ENCODE measurements at regions of chr20 and their contacts with region 1.

Region 1: DNA sequence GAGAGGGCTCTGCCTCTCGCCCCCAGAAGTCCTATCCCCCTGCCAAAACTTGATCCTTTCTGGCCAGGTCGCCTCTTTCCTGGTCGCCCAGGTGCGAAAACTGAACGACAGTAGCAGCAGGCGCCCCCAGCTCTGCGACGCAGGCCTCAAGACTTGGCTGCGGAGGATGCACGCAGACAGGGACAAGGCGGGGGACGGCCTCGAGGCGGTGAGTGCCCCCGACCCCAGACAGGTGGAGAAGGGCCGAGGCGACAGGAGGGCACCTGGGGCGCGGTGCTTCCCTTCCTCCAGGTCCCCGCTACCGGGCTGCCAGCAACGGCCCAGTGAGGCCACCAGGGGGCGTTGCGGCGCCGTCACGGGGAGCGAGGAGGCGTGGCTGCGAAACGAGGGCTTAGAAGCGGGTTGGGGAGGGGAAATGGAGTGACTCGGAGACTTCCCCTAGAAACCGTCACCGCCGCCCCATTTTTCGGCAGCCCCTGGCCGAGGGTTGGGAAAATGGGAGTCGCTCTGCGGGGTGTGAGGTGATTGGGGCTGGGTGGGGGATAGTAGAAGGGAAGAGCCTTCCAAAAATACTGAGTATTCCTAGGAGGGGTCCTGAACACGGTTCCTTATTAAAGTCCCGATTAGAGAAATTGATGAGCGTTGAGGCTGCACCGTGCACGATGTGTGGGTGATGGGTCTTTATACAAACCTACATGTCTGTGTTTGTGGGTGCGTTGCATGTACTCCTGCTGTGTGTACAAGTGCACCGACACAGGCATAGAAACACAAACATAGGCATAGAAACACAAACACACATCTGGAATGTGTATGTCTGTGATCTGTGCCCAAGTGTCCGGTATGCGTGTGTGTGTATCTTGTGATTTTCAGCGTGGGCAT is 44.6 kb downstream of the ARHGAP40 start:
- DNase-seq: peak; percentile 93
- ATAC-seq: peak; percentile 98
- H3K4me3 Mint-ChIP-seq: peak overlapping the region; percentile 81
- H3K27ac Mint-ChIP-seq: no peak overlapping the region
- H3K4me1 Mint-ChIP-seq: peaks cover 22% of the 10 kb centered on the region
- H3K27me3 Mint-ChIP-seq: peaks cover 30% of the 10 kb centered on the region
- CTCF ChIP-seq: peak; percentile 45

Region 2: DNA sequence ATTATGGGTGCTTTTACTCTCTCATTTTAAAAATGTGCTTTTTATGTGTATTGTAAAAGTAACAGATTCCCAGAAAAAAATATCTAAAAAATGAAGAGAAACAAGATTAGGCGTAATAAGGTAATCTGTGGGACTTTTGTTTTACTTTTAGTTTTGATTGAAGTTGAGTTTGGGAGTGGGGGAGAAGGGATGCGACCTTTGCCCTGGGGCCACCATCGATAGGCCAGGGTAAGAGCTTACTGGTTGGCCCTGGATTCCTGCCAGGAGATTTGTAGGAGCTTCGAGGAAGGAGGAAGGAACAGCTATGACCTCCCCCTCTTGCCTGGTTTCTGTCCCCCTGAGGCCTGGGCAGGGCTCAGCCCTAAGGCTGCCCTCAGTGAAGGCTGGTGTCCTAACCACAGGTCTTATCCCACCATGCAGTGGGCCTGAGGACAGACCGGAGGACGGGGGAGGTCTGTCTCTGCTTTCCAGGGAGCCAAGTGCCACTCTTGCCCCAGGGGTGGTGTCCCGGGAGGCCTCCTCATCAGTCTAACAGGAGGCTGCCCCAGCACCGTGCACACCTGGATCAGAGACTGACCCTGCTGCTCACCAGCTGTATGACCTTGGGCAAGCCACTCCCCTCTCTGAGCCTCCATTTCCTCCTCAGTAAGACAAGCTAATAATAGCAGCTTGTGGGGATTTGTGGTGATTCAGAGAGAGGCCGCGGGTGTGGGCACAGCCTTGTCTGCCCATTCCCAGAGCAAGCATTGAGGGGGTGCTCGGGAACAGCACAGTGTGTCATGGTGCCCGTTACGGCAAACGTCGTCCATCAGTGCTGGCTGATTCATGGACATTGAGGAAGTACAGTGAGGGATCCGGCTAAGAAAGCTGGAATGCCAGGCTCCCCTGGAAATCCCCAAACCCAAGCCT is 502.3 kb before region 1 on chr20:
- CTCF ChIA-PET with region 1: no interaction called
- POLR2A ChIA-PET with region 1: no interaction called
- intact Hi-C with region 1: no loop called
- DNase-seq: no peak
- ATAC-seq: no peak
- H3K4me3 Mint-ChIP-seq: no peak overlapping the region
- H3K27ac Mint-ChIP-seq: no peak overlapping the region
- H3K4me1 Mint-ChIP-seq: no peaks in the 10 kb centered on the region
- H3K27me3 Mint-ChIP-seq: no peaks in the 10 kb centered on the region
- CTCF ChIP-seq: no peak

Region 3: GRCh38 chr20:38730989-38731737 is 84.9 kb after region 1 on chr20:
- CTCF ChIA-PET with region 1: no interaction called
- POLR2A ChIA-PET with region 1: no interaction called
- intact Hi-C with region 1: loop called (anchors 1 kb)
- DNase-seq: peak; percentile 68
- ATAC-seq: peak; percentile 76
- H3K4me3 Mint-ChIP-seq: peak overlapping the region; percentile 65
- H3K27ac Mint-ChIP-seq: no peak overlapping the region
- H3K4me1 Mint-ChIP-seq: peaks cover 52% of the 10 kb centered on the region
- H3K27me3 Mint-ChIP-seq: peaks cover 88% of the 10 kb centered on the region
- CTCF ChIP-seq: peak; percentile 77

Region 4: GRCh38 chr20:38935285-38935684 is 289.1 kb after region 1 on chr20:
- CTCF ChIA-PET with region 1: no interaction called
- POLR2A ChIA-PET with region 1: no interaction called
- intact Hi-C with region 1: loop called (anchors 1 kb)
- DNase-seq: no peak
- ATAC-seq: no peak
- H3K4me3 Mint-ChIP-seq: no peak overlapping the region
- H3K27ac Mint-ChIP-seq: no peak overlapping the region
- H3K4me1 Mint-ChIP-seq: no peaks in the 10 kb centered on the region
- H3K27me3 Mint-ChIP-seq: no peaks in the 10 kb centered on the region
- CTCF ChIP-seq: no peak

Region 5: GRCh38 chr20:38985603-38986170 is 339.5 kb after region 1 on chr20:
- CTCF ChIA-PET with region 1: no interaction called
- POLR2A ChIA-PET with region 1: no interaction called
- intact Hi-C with region 1: loop called (anchors 2 kb)
- DNase-seq: no peak
- ATAC-seq: no peak
- H3K4me3 Mint-ChIP-seq: no peak overlapping the region
- H3K27ac Mint-ChIP-seq: no peak overlapping the region
- H3K4me1 Mint-ChIP-seq: peaks cover 17% of the 10 kb centered on the region
- H3K27me3 Mint-ChIP-seq: no peaks in the 10 kb centered on the region
- CTCF ChIP-seq: no peak

Region 6: GRCh38 chr20:38997622-38998021 is 351.4 kb after region 1 on chr20:
- CTCF ChIA-PET with region 1: no interaction called
- POLR2A ChIA-PET with region 1: no interaction called
- intact Hi-C with region 1: loop called (anchors 1 kb)
- DNase-seq: no peak
- ATAC-seq: peak; percentile 56
- H3K4me3 Mint-ChIP-seq: no peak overlapping the region
- H3K27ac Mint-ChIP-seq: no peak overlapping the region
- H3K4me1 Mint-ChIP-seq: peaks cover 4% of the 10 kb centered on the region
- H3K27me3 Mint-ChIP-seq: no peaks in the 10 kb centered on the region
- CTCF ChIP-seq: no peak

Region 7: DNA sequence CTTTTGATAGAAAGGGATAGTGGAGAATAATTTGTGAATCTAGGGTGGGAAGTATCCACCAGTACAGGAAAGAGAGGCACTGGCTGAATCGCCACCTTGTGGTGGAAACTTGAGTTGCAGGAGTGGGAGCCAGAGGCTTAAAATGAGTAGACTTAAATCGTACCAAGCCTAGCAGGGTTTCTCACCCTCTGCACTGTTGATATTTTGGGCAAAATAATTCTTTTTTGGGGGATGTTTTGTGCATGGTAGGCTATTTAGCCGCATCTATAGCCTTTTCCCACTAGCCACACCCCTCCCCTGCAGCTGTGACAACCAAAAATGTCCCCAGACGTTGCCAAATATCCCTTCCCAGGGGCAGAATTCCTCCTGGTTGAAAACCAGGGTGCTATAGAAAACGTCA is 435.0 kb after region 1 on chr20:
- CTCF ChIA-PET with region 1: interaction called, 3 read pairs
- POLR2A ChIA-PET with region 1: no interaction called
- intact Hi-C with region 1: loop called (anchors 1 kb)
- DNase-seq: peak; percentile 64
- ATAC-seq: peak; percentile 86
- H3K4me3 Mint-ChIP-seq: no peak overlapping the region
- H3K27ac Mint-ChIP-seq: no peak overlapping the region
- H3K4me1 Mint-ChIP-seq: no peaks in the 10 kb centered on the region
- H3K27me3 Mint-ChIP-seq: peaks cover 32% of the 10 kb centered on the region
- CTCF ChIP-seq: peak; percentile 87